Mammary epithelial cell (primary cell): ENCODE measurements at regions of chr12 and their contacts with region 1.

Region 1: DNA sequence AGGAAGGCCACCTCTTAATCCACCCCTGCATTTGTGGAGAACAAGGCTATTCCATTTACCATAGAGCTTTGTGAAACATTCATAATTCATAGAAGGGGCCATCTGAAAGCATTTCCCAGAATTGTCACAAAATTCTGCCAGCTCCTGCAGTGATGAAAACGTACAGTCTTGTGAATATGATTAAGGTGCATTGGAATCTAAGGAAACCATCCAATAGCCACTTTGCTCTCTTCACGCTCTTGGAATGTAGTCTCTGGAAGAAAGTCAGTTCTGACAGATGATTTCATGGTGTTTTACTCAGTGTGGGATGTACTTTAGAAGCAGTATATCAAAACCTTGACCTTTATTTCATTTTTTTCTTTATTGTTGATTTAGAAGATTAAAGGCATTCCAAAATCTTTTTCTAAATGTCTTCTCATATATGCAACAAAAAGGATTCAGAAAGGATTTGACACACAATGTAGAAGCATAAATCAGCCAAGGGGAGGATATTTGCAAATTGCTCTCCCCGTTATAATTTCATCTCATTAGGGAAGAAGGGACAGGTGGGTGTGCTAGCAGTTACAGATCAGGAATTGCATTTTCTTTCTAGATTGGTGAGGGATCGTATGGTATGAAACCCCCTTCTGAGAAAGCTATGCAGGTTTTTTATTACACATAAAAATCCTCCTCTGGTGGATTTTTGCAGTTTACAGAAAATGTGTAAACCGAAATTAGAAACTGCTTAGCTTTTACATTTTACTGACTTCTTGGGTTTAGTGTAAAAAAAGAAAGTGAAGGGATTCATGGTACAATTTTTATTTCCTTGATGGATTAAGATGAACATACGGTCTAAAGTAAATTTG is 390.2 kb downstream of the LRIG3 start:
- DNase-seq: peak; percentile 84
- H3K4me3 ChIP-seq: no peak overlapping the region
- H3K27ac ChIP-seq: peak overlapping the region; percentile 57
- H3K4me1 ChIP-seq: peaks cover 41% of the 10 kb centered on the region
- H3K27me3 ChIP-seq: no peaks in the 10 kb centered on the region
- CTCF ChIP-seq: no peak

Region 2: DNA sequence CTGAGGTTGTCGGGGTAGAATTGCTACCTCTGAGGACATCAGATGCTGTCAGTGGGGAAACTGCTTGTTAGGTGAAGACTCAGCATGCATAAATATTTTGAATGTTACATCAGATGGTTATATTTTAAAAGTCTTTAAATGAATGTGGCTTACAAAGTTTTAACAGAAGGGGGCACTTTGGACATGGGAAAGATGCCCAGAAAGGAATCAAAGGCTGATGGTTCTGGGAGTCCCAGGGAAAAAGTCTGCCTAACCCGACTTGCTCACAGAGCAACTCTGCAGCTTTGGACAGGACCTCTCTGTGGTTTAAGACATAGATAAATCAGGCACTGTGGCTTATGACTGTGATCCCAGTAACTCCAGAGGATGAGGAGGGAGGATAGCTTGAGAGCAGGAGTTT is 113.9 kb before region 1 on chr12:
- CTCF ChIA-PET with region 1: no interaction called
- dilution Hi-C with region 1: no loop called
- in situ Hi-C with region 1: no loop called
- intact Hi-C with region 1: loop called (anchors 10 kb)
- DNase-seq: peak; percentile 57
- H3K4me3 ChIP-seq: no peak overlapping the region
- H3K27ac ChIP-seq: no peak overlapping the region
- H3K4me1 ChIP-seq: peaks cover 39% of the 10 kb centered on the region
- H3K27me3 ChIP-seq: no peaks in the 10 kb centered on the region
- CTCF ChIP-seq: peak in 1 of 2 donors; percentile 24

Region 3: GRCh38 chr12:58557171-58557570 is 27.1 kb after region 1 on chr12:
- CTCF ChIA-PET with region 1: no interaction called
- dilution Hi-C with region 1: no loop called
- in situ Hi-C with region 1: no loop called
- intact Hi-C with region 1: no loop called
- DNase-seq: peak; percentile 25
- H3K4me3 ChIP-seq: no peak overlapping the region
- H3K27ac ChIP-seq: no peak overlapping the region
- H3K4me1 ChIP-seq: peaks cover 10% of the 10 kb centered on the region
- H3K27me3 ChIP-seq: no peaks in the 10 kb centered on the region
- CTCF ChIP-seq: no peak